Activated CD4-positive, alpha-beta T cell treated with anti-CD3 and anti-CD28 coated beads, Interleukin-2, amount 10 ng/mL, durations not matched to agents 24 days and 14 days (primary cell): ENCODE measurements at regions of chr1 and their contacts with region 1.

Region 1: DNA sequence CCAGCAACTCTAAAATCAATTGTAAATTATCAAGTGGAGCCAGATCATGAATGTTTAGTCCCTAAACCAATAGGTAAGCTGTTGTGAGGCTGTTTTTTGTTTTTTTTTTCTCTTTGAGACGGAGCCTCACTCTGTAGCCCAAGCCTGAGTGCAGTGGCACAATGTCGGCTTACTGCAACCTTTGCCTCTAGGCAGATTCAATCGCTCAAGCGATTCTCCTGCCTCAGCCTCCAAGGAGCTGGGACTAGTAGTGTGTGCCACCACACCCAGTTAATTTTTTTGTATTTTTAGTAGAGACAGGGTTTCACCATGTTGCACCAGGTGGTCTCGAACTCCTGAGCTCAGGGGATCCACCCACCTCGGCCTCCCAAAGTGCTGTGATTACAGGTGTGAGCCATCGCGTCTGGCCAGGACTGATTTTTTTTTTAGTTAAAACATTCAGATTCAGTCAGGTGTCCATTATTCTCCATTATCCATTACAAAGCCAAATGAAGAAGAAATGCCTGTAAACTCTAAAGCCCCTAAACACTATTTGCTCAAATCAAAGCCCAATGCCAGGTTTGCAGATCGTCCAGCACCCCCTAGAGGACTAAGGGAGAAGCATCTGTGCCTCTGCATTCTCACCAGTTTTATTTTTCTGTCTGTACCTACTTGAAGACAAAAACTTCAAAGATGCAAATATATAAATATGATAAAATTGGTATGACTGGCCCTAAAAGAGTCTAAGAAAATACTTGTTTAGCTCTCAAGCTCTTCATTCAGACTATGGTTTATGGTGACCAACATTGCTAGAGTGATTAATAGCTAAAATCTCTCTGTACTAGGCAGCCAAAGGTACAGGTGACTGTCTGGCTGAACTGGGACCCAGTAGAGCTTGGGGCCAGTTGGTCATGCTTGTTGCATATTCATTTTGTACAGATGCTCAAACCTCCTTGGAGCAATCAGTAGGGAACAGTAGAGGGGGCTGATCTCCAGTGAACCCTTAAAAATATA is 138.6 kb downstream of the SYT2 start:
- DNase-seq: peak; percentile 78
- H3K4me3 Mint-ChIP-seq: no peak overlapping the region
- H3K27ac Mint-ChIP-seq: no peak overlapping the region
- H3K4me1 Mint-ChIP-seq: peaks cover 5% of the 10 kb centered on the region
- H3K27me3 Mint-ChIP-seq: no peaks in the 10 kb centered on the region

Region 2: DNA sequence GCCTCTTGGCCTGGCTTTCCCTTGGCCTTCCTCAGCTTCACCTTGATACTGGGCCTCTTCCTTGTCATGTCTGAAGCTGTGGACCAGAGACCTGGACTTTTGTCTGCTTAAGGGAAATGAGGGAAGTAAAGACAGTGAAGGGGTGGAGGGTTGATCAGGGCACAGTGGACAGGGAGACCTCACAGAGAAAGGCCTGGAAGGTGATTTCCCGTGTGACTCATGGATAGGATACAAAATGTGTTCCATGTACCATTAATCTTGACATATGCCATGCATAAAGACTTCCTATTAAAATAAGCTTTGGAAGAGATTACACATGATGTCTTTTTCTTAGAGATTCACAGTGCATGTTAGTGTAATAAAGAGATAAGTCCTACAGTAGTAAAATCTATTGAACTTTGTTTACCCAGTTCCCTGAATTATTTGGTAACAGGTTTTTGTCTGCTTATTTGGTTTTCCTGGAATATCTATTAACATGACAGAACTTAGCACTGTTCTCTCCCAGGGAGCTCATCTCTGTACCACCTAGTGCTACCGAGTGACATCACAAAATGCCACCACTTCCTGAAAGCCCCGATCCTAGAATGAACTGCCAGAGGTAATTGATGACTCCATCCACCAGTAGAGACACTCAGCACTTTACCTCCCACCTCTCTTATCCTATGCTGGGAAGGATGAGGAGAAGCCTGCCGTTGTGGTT is 252.1 kb before region 1 on chr1:
- intact Hi-C with region 1: no loop called
- DNase-seq: no peak
- H3K4me3 Mint-ChIP-seq: no peak overlapping the region
- H3K27ac Mint-ChIP-seq: no peak overlapping the region
- H3K4me1 Mint-ChIP-seq: peaks cover 7% of the 10 kb centered on the region
- H3K27me3 Mint-ChIP-seq: peaks cover 13% of the 10 kb centered on the region

Region 3: GRCh38 chr1:202501281-202501680 is 70.4 kb before region 1 on chr1:
- intact Hi-C with region 1: loop called (anchors 5 kb)
- DNase-seq: no peak
- H3K4me3 Mint-ChIP-seq: no peak overlapping the region
- H3K27ac Mint-ChIP-seq: no peak overlapping the region
- H3K4me1 Mint-ChIP-seq: no peaks in the 10 kb centered on the region
- H3K27me3 Mint-ChIP-seq: no peaks in the 10 kb centered on the region

Region 4: DNA sequence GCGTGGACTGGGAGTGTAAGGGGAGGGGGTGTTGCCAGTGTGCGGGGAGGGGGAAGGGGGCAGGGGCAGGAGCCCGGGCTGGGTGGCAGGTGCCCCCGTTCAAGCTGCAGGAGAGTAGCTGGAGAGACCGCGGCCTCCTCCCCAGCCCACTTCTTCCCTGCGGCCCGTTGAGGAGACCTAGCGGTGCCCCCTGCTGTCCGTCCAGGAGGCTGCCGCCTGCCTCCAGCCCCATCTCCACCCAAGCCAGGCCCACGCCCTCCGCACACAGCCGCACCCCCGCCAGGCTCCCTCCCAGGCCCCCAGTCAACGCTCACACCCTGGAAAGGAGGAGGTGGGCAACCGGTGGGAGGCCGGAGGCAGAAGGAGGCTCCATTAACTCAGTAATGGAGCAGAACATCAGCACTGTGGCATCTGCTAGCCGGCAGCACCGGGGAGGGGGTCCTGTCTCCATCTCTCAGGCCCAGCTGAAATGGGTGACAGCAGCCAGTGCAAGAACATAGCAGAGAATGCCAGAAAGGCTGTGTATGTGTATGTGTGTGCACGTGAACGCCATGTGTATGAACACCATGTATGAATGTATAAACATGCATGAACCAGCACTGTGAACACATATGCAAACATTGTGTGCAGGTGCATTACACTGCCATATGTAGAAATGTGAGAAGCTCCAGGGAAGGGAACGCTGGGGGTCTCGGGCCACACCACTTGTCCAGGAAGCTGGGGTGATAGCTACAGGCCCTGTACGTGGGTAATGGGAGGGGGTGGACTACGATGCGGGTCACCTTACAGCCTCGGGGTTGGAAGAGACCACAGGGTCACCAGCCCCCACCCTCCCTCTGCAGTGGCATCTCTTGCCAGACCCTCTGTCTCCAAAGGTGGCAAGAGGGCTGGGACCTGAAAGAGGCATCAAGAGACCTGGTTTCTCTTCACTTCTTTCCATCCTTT is 54.0 kb after region 1 on chr1:
- intact Hi-C with region 1: no loop called
- DNase-seq: peak; percentile 87
- H3K4me3 Mint-ChIP-seq: no peak overlapping the region
- H3K27ac Mint-ChIP-seq: no peak overlapping the region
- H3K4me1 Mint-ChIP-seq: peaks cover 20% of the 10 kb centered on the region
- H3K27me3 Mint-ChIP-seq: peaks cover 26% of the 10 kb centered on the region

Region 5: GRCh38 chr1:203395751-203396150 is 824.1 kb after region 1 on chr1:
- intact Hi-C with region 1: no loop called
- DNase-seq: no peak
- H3K4me3 Mint-ChIP-seq: no peak overlapping the region
- H3K27ac Mint-ChIP-seq: no peak overlapping the region
- H3K4me1 Mint-ChIP-seq: no peaks in the 10 kb centered on the region
- H3K27me3 Mint-ChIP-seq: peaks cover 26% of the 10 kb centered on the region